CD4-positive, alpha-beta memory T cell (primary cell): ENCODE measurements at regions of chr5 and their contacts with region 1.

Region 1: GRCh38 chr5:73591102-73591695 is 25.7 kb downstream of the UTP15 start:
- DNase-seq: peak; percentile 51 to 66 (median 62)
- H3K4me3 ChIP-seq: no peak overlapping the region
- H3K4me3 Mint-ChIP-seq: no peak overlapping the region
- H3K27ac ChIP-seq: no peak overlapping the region
- H3K27ac Mint-ChIP-seq: no peak overlapping the region
- H3K4me1 ChIP-seq: no peaks in the 10 kb centered on the region
- H3K4me1 Mint-ChIP-seq: no peaks in the 10 kb centered on the region
- H3K27me3 ChIP-seq: no peaks in the 10 kb centered on the region
- H3K27me3 Mint-ChIP-seq: no peaks in the 10 kb centered on the region

Region 2: DNA sequence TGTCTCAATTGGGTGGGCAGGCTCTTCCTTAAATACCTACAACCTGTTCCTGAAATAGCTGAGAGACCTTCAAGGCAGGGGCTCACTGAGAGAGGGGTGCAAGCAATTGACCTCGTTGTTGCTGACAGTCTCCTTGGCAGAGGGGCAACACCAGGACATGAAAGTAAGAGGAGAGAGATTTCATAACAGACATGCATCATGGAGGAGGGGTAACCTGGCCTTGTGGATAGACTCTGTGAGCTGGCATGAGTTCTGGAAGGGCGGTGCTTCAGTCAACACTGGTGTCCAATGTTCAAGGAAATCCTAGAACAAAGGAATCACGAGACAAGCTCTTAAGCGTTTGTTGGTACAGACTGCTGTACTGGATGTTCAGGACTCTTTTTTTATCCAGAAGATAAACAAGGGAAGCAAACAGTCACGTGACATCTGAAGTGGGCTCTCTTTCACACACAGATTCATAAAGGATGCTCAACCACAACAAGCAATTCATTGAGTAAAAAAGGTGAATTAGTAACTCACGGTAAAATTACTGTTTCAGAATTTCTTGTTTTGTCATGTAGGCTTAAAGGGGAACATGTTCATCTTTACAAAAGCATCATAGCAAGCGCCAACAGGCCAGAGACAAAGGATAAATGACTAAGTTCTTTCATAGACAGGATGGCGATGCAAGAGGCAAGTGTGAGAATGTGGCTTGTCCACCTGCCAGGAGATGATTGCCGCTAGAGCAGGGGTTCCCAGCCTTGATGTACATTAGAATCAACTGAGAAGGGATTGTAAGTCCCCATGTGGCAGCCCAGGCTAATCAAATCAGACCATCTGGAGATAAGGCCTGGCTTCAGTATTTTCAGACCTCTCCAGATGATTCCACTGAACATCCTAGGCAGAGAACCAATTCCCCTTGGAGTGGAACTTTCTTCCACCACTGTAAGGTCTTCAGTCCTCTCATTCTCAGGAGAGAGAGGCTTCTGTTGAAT is 46.5 kb before region 1 on chr5:
- CTCF ChIA-PET with region 1: no interaction called
- POLR2A ChIA-PET with region 1: no interaction called
- intact Hi-C with region 1: no loop called
- DNase-seq: no peak
- H3K4me3 ChIP-seq: no peak overlapping the region
- H3K4me3 Mint-ChIP-seq: no peak overlapping the region
- H3K27ac ChIP-seq: no peak overlapping the region
- H3K27ac Mint-ChIP-seq: no peak overlapping the region
- H3K4me1 ChIP-seq: no peaks in the 10 kb centered on the region
- H3K4me1 Mint-ChIP-seq: no peaks in the 10 kb centered on the region
- H3K27me3 ChIP-seq: no peaks in the 10 kb centered on the region
- H3K27me3 Mint-ChIP-seq: peaks cover 12 to 30% of the 10 kb centered on the region in 2 donors

Region 3: DNA sequence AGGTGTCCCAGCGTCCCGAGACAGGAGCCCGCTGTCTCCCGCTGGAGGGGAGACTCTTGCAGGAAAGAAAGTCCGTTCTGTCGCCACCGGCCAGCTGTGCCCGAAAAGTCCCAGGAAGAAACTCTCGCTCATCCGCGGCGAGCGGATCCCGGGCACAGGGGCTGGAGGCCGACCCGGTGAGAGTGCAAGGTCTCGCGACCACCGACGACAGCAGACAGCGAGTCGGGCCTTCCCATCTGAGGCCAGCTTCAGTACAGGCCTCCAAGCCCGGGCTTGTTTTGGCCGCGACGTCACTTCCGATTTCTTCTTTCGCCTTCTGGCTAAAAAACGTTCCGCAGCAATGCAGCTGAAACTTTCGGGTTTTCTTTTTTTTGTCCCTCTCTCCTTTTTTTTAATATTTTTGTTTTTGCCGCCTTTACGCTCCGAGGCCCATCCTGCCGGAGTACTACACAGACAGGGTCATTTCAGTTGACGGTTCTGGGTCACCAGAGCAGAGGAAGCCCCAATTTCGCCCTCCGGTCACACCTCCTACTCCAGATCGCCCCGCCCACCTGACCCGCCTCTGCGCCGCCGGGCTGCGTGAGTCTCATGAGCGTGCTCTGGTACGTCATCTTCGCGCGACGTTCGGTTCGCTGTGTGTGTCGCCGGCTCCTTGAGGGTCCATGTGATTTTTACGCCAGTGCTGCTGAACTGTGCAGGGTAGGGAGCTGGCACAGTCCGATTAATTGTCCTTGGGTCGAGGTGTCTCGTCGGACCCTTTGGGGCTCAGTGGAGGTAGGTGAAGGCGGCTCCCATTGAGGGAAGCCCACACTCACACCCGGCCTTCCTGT is 25.8 kb before region 1 on chr5 and contains the starts of genes ANKRA2 and UTP15:
- CTCF ChIA-PET with region 1: interaction called, 13 read pairs
- POLR2A ChIA-PET with region 1: no interaction called
- intact Hi-C with region 1: no loop called
- DNase-seq: peak; percentile 96 to 98 (median 97)
- H3K4me3 ChIP-seq: peak within 1 kb of the TSS; percentile 45 to 83
- H3K4me3 Mint-ChIP-seq: peak within 1 kb of the TSS; percentile 95 to 100 (median 99)
- H3K27ac ChIP-seq: peak within 1 kb of the TSS; percentile 99
- H3K27ac Mint-ChIP-seq: peak within 1 kb of the TSS; percentile 98 to 100 (median 99)
- H3K4me1 ChIP-seq: peaks cover 35% of the 10 kb centered on the region
- H3K4me1 Mint-ChIP-seq: peaks cover 26 to 53% (median 39%) of the 10 kb centered on the region in 4 donors
- H3K27me3 ChIP-seq: no peaks in the 10 kb centered on the region
- H3K27me3 Mint-ChIP-seq: no peaks in the 10 kb centered on the region
- total RNA-seq, gene ANKRA2: 51.9 to 59.4 TPM
- total RNA-seq, gene UTP15: 22.6 to 22.7 TPM

Region 4: GRCh38 chr5:73693481-73694061 is 102.4 kb after region 1 on chr5:
- CTCF ChIA-PET with region 1: interaction called, 12 read pairs
- POLR2A ChIA-PET with region 1: no interaction called
- intact Hi-C with region 1: loop called (anchors 5 kb)
- DNase-seq: no peak
- H3K4me3 ChIP-seq: no peak overlapping the region
- H3K4me3 Mint-ChIP-seq: no peak overlapping the region
- H3K27ac ChIP-seq: no peak overlapping the region
- H3K27ac Mint-ChIP-seq: peak overlapping the region in 2 of 7 donors; percentile 24 to 26
- H3K4me1 ChIP-seq: no peaks in the 10 kb centered on the region
- H3K4me1 Mint-ChIP-seq: peaks cover 0 to 12% (median 5%) of the 10 kb centered on the region in 4 donors
- H3K27me3 ChIP-seq: no peaks in the 10 kb centered on the region
- H3K27me3 Mint-ChIP-seq: peaks cover 2 to 9% of the 10 kb centered on the region in 2 donors

Region 5: GRCh38 chr5:73792687-73793320 is 201.6 kb after region 1 on chr5:
- CTCF ChIA-PET with region 1: interaction called, 185 read pairs
- POLR2A ChIA-PET with region 1: interaction called, 3 read pairs
- intact Hi-C with region 1: loop called (anchors 1 kb)
- DNase-seq: peak; percentile 42 to 59 (median 44)
- H3K4me3 ChIP-seq: no peak overlapping the region
- H3K4me3 Mint-ChIP-seq: no peak overlapping the region
- H3K27ac ChIP-seq: no peak overlapping the region
- H3K27ac Mint-ChIP-seq: no peak overlapping the region
- H3K4me1 ChIP-seq: no peaks in the 10 kb centered on the region
- H3K4me1 Mint-ChIP-seq: peaks cover 0 to 2% (median 0%) of the 10 kb centered on the region in 4 donors
- H3K27me3 ChIP-seq: no peaks in the 10 kb centered on the region
- H3K27me3 Mint-ChIP-seq: peaks cover 5 to 22% of the 10 kb centered on the region in 2 donors

Region 6: GRCh38 chr5:74640450-74640953 is 1049.3 kb after region 1 on chr5 and contains the start of gene ENC1:
- CTCF ChIA-PET with region 1: no interaction called
- POLR2A ChIA-PET with region 1: no interaction called
- intact Hi-C with region 1: loop called (anchors 2 kb)
- DNase-seq: peak; percentile 61 to 73 (median 72)
- H3K4me3 ChIP-seq: peak within 1 kb of the TSS; percentile 54 to 64
- H3K4me3 Mint-ChIP-seq: peak within 1 kb of the TSS; percentile 84 to 96 (median 90)
- H3K27ac ChIP-seq: peak within 1 kb of the TSS; percentile 26
- H3K27ac Mint-ChIP-seq: peak within 1 kb of the TSS in 4 of 7 donors; percentile 27 to 54 (median 34)
- H3K4me1 ChIP-seq: peaks cover 25% of the 10 kb centered on the region
- H3K4me1 Mint-ChIP-seq: peaks cover 15 to 33% (median 22%) of the 10 kb centered on the region in 4 donors
- H3K27me3 ChIP-seq: no peaks in the 10 kb centered on the region
- H3K27me3 Mint-ChIP-seq: peaks cover 10 to 13% of the 10 kb centered on the region in 2 donors
- total RNA-seq, gene ENC1: 0.61 to 0.84 TPM